ENCODE measurements at regions of chr1 and their contacts with region 1.

Region 1: DNA sequence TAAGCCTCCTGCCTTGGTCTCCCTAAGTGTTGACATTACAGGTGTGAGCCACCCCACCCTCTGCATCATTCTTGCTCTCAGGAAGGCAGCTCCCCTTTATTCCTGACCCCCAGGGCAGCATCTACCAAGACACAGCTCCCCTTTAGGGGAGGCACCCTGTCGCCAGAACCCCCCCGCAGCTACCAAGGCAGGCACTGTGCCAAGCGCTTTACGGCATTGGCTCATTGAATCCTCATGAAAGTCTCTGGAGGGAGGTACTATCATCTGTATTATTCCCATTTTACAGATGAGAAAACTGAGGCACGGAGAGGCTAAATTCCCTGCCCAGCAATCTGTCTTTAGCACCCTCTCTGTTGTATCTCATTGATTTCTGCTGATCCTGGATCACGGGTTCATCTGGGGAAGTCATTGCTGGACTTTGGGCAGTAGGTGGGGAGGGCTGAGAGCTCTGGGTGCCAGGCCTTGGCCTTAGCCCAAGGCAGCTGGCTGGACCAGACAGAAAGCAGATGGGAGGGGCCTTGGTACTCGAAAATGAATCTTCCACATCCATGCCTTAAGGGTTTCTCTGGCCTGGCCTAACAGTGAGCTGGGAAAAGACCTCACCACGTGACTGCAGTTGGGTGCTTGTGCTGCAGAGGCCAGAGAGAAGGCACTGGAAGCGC is 5.9 kb downstream of the PLOD1 start:
- DNase-seq: peak; percentile 90
- H3K4me3 ChIP-seq: no peak overlapping the region
- H3K27ac ChIP-seq: peak overlapping the region in 1 of 2 experiments; percentile 90; a peak in 2 of 4 replicates
- H3K4me1 ChIP-seq: peaks cover 12 to 63% of the 10 kb centered on the region in 2 experiments; a peak in 3 of 4 replicates
- H3K27me3 ChIP-seq: no peaks in the 10 kb centered on the region
- CTCF ChIP-seq: no peak
- EP300 ChIP-seq: peak in 1 of 2 experiments; percentile 90; a peak in 2 of 4 replicates
- RAD21 ChIP-seq: peak; percentile 30

Region 2: DNA sequence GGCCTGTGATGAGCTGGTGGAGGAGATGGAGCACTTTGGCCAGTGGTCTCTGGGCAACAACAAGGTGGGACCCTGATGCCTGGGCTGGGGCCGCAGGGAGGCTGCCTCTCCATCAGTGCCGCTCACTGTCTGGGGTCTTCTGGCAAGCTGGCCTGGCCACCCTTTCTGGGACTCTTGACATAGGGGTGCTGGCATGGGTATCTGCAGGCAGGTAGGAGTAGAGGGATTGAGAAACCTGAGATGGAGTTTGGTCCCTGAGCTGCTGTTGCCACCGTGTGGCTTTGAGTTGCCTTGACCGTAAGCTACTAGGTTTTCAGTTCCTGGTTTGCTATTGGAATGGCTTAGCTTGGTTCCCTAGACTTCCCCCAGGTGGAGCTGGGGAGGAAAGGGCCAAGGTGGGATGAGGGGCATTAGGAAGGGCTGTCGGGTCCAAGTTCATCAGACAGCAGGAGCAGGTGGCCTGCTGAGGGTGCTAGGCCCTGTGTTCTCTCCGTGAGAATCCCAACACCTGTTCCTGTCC is 26.7 kb after region 1 on chr1:
- CTCF ChIA-PET with region 1: interaction called, 3 read pairs
- POLR2A ChIA-PET with region 1: interaction called, 10 read pairs
- DNase-seq: peak; percentile 69
- H3K4me3 ChIP-seq: no peak overlapping the region
- H3K27ac ChIP-seq: no peak overlapping the region
- H3K4me1 ChIP-seq: no peaks in the 10 kb centered on the region
- H3K27me3 ChIP-seq: no peaks in the 10 kb centered on the region
- CTCF ChIP-seq: peak; percentile 36
- EP300 ChIP-seq: no peak
- RAD21 ChIP-seq: peak; percentile 80